ENCODE measurements at regions of chr1 and their contacts with region 1.

Region 1: DNA sequence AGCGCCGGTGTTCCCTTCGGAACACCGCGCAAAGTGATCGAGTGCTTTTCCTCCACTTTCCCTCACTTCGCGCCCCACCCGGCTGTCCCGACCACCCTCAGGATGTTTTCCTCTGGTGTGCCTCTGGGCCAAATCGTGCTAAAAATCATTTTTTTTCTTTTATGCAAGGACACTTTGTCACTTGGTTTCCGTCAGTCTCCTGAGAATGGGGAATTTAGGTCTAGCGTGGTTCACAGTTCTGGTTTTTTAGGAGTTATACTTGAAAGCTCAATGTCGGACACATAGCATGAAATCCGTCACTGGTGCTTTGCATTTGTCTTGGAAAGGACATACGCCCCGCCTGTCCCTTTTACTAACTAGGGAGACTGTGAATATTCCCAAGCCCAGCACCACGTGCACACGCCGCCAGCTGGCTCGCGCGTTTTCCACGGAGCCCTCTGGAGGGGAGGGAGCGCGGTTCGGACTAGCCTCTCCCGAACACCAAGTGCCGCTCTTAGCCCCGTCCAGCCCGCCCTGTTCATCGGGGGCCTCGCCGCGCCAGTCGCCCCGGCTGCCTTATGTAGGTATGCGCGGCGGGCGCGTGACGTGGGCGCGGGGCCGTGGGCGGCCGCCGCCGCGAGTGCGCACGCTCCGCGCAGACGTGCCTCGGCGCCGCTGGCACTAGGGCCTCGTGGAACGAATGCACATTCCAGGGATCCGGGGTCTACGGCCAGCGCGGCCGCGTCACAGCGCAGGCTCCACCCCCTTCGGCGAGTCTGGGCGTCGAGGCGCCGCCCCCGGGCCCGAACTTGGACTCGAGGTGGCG is 572 bp upstream of the IRF2BP2 start:
- DNase-seq: peak; percentile 86
- H3K4me3 Mint-ChIP-seq: peak overlapping the region; percentile 88
- H3K27ac Mint-ChIP-seq: peak overlapping the region; percentile 98
- H3K4me1 Mint-ChIP-seq: peaks cover 39% of the 10 kb centered on the region
- H3K27me3 Mint-ChIP-seq: peaks cover 2% of the 10 kb centered on the region

Region 2: DNA sequence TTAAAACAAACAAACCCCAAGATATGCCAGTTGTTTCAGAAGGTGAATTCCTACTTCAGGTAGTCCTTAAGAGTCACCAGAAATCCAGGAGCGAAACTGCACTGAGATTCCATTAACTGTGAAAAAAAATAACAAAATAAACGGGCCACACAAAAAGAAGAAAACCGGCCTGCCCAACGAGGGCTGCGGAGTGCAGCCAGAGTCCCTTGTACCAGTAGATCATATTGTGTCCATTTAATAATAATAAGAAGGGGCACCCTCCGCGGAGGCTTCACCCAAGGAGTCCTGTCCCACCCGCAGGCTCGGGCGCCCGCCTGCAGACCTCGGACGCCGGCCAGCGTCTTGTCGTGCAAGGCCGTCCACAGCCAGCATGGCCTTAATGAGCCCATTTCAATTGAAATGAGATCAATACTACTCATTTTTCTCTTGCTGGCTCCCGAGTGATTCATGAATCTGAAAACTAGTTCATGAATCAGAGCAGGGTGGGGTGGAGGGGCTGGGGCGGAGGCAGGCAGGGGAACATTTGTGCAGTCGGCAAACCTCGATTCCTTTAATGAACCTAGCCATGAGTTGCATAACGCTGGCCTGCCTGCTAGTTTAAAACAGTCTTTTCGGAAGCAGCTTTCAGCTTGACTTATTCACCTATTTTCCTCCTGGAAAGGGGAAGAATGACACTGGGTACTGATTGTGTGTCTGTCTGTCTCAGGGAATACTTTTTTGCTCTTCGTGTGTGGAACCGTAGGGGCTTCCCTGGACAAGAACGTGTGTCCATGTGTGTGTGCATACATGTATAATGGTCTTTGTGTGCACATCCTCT is 112.6 kb after region 1 on chr1:
- intact Hi-C with region 1: loop called (anchors 1 kb)
- DNase-seq: peak; percentile 26
- H3K4me3 Mint-ChIP-seq: peak overlapping the region; percentile 72
- H3K27ac Mint-ChIP-seq: peak overlapping the region; percentile 99
- H3K4me1 Mint-ChIP-seq: peaks cover 73% of the 10 kb centered on the region
- H3K27me3 Mint-ChIP-seq: no peaks in the 10 kb centered on the region

Region 3: DNA sequence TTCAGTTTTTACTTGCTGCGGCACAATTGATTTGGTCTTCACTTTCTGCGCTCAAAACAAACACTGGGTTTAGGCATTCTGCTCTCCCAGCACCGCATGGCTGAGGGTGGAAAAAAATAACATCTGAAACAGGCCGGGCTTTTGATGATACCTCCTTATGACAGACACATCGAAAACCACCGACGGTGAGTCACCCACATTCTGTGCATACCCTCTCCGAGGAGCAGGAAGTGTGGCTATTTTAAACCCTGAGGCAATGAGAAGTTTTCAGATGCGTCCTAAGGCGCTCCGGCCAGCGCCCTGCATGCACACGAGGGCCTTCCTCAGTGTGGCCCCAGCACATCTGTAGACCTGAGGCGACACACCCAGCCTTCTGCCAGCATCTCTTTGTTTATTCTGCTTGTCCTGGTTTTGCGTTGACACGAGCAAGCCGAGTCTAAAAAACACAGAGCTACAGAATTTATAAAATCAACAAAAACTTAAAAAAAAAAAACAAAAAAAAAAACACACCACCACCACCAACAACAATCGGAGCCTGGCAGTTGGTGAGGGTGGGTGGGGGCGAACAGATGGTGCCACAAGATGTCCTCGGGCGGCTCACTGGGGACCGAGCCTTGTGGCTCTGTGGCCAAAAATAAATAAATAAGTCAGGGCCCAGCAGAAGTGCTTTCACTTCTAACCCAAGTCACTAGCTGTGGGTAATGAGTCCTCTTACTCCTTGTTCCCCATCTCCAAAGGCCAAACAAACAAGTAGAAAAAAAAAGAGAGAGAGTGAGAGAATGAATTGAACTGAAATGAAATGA is 162.0 kb after region 1 on chr1:
- intact Hi-C with region 1: loop called (anchors 1 kb)
- DNase-seq: peak; percentile 86
- H3K4me3 Mint-ChIP-seq: peak overlapping the region; percentile 71
- H3K27ac Mint-ChIP-seq: peak overlapping the region; percentile 97
- H3K4me1 Mint-ChIP-seq: peaks cover 58% of the 10 kb centered on the region
- H3K27me3 Mint-ChIP-seq: no peaks in the 10 kb centered on the region

Region 4: GRCh38 chr1:234862944-234863515 is 252.5 kb after region 1 on chr1:
- intact Hi-C with region 1: loop called (anchors 1 kb)
- DNase-seq: no peak
- H3K4me3 Mint-ChIP-seq: no peak overlapping the region
- H3K27ac Mint-ChIP-seq: no peak overlapping the region
- H3K4me1 Mint-ChIP-seq: peaks cover 30% of the 10 kb centered on the region
- H3K27me3 Mint-ChIP-seq: no peaks in the 10 kb centered on the region

Region 5: DNA sequence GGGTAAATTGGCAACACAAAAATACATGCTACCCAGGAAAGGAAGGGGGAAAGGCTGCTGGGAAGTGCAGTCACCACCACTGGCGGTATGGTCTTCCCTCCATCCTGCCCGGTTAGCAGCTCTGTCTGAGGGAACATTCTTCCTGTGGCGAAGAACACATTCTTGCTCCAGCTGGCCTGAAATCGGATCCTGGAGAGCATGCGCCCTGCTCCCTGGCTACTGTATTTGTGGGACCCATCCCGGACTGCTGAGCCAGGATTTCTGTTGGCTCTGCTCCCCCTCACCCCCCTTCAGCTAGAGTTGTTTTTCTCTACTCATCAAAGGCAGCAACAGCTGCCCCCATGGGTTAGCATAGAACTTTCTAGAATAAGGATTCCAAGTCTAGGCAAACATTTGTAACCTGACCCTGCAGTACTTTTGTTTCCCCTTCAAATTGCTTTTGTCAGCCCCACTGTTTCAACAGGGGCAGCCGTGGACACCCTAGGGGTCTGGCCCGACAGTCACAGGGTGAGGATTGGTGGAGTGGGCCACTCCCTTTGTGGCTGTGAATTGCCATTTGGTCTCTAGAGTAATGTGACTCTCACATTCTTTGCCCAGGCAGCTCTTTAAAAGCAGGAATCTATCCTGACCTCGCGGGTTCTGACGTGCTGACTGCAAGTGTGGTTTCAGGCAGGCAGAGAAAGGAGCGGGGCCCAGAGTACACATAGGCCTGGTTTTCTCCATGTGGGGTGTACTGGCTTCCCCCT is 360.4 kb after region 1 on chr1:
- intact Hi-C with region 1: loop called (anchors 2 kb)
- DNase-seq: no peak
- H3K4me3 Mint-ChIP-seq: no peak overlapping the region
- H3K27ac Mint-ChIP-seq: peak overlapping the region; percentile 85
- H3K4me1 Mint-ChIP-seq: peaks cover 66% of the 10 kb centered on the region
- H3K27me3 Mint-ChIP-seq: no peaks in the 10 kb centered on the region

Measured in activated T-helper 2 cell treated with anti-CD3 and anti-CD28 coated beads, Interferon-gamma antibody, Interleukin-2, Interleukin-4, amounts not matched to agents 10 μg/mL and 5 μg/mL and 100 μg/mL, durations not matched to agents 14 hours and 24 hours and 36 hours (primary cell).